Gastrocnemius medialis (tissue), 4 donors: ENCODE measurements at regions of chr11 and their contacts with region 1.

Region 1: DNA sequence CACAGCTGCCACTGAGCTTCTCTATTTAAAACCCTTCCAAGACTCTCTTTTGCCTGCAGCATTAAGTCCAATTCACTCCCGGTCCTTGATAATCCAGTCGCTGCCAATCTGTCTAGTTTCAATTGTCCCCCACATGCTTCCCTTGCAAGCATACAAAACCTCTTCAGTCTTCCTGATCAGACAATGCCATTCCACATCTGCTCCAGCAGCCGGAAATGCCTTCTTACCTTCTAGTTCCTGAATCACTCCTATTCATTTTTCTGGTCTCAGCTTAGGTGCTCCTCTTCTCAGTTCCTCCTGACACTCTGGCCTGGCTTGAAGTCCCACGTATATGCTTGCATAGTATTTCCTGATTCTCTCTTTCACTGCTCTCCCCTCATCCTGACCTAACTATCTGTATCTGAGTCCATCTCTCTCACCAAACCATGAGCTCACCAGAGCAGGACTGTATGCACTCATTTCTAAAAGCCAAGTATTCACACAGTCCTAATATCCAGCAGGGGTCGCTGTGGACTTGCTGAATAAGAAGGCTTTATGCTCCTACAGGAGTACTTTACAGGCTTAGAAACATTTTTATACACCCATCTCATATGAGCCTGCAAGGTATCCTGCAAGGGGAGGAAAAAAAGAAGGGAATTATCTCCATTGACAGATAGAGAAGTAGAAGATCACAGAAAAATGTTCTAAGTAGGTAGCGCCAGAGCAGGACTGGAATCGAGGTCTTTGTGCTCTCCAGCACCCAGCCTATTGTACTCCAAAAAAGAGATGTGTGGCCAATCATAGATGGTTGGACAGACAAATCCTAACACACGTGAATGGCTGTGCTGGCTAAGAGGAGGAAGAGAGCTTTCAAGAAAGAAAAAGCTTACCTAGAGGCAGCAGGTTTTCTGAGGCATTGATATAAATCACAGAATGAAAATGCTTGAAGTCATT is 19.2 kb downstream of the XRRA1 start:
- DNase-seq: peak; percentile 54 to 65
- ATAC-seq: peak; percentile 79 to 94
- H3K4me3 ChIP-seq: no peak overlapping the region
- H3K27ac ChIP-seq: no peak overlapping the region
- H3K4me1 ChIP-seq: peaks cover 6 to 8% of the 10 kb centered on the region in 2 donors
- H3K27me3 ChIP-seq: no peaks in the 10 kb centered on the region
- CTCF ChIP-seq: peak; percentile 63 to 85 (median 84)
- POLR2A ChIP-seq: no peak

Region 2: DNA sequence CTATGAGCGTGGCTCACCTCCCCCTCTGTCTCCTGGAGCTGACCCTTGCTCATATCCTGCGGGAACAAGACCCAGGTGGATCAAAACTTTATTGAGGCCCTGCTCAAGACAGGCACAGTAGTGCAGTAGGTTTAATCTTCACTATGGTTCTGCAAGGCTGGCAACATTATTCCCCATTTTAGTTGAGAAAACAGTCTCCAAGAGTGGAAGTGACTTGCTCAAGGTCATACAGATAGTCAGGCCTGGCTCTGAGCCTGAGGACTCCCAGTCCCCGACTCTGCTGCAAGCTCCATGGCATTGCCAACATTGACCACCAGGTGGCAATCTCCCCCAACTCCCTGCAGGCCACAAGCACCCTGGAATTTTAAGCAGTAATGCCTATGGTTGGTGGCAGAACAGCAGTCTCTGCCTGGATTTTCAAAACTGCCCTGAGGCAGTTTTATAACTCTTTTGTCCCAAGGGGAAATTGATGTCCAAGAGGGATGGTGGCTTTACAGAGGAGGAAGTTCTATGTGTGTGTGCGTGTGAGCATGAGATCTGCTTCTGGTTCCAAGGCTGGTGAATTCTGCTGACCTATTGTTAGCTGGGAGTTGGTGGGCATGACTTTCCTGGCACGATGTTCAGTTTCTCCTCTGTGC is 93.2 kb after region 1 on chr11:
- in situ Hi-C with region 1: loop called in 2 of 4 experiments (anchors 5 to 10 kb)
- intact Hi-C with region 1: no loop called
- DNase-seq: peak; percentile 49 to 82
- ATAC-seq: peak; percentile 79 to 92
- H3K4me3 ChIP-seq: no peak overlapping the region
- H3K27ac ChIP-seq: peak overlapping the region; percentile 3 to 60 (median 8)
- H3K4me1 ChIP-seq: peaks cover 30 to 42% of the 10 kb centered on the region in 2 donors
- H3K27me3 ChIP-seq: no peaks in the 10 kb centered on the region
- CTCF ChIP-seq: peak; percentile 86 to 96 (median 89)
- POLR2A ChIP-seq: no peak

Region 3: GRCh38 chr11:75031771-75032549 is 102.3 kb after region 1 on chr11:
- in situ Hi-C with region 1: loop called in 2 of 4 experiments (anchors 5 to 10 kb)
- intact Hi-C with region 1: loop called (anchors 1 kb)
- DNase-seq: peak; percentile 50 to 69
- ATAC-seq: peak; percentile 74 to 92
- H3K4me3 ChIP-seq: no peak overlapping the region
- H3K27ac ChIP-seq: no peak overlapping the region
- H3K4me1 ChIP-seq: peaks cover 12 to 20% of the 10 kb centered on the region in 2 donors
- H3K27me3 ChIP-seq: no peaks in the 10 kb centered on the region
- CTCF ChIP-seq: peak; percentile 49 to 83 (median 77)
- POLR2A ChIP-seq: no peak

Region 4: GRCh38 chr11:75204685-75205563 is 275.2 kb after region 1 on chr11:
- in situ Hi-C with region 1: no loop called
- intact Hi-C with region 1: loop called (anchors 10 kb)
- DNase-seq: peak; percentile 49 to 68
- ATAC-seq: peak; percentile 81 to 92
- H3K4me3 ChIP-seq: no peak overlapping the region
- H3K27ac ChIP-seq: no peak overlapping the region
- H3K4me1 ChIP-seq: no peaks in the 10 kb centered on the region
- H3K27me3 ChIP-seq: no peaks in the 10 kb centered on the region
- CTCF ChIP-seq: peak; percentile 60 to 87 (median 82)
- POLR2A ChIP-seq: no peak

Region 5: GRCh38 chr11:75241036-75241905 is 311.6 kb after region 1 on chr11:
- in situ Hi-C with region 1: loop called (anchors 5 to 25 kb)
- intact Hi-C with region 1: loop called (anchors 1 kb)
- DNase-seq: peak; percentile 23 to 61
- ATAC-seq: peak; percentile 94 to 95
- H3K4me3 ChIP-seq: peak overlapping the region in 3 of 4 donors; percentile 35 to 46 (median 43)
- H3K27ac ChIP-seq: no peak overlapping the region
- H3K4me1 ChIP-seq: peaks cover 0 to 6% of the 10 kb centered on the region in 2 donors
- H3K27me3 ChIP-seq: peaks cover 27 to 28% (median 27%) of the 10 kb centered on the region in 3 donors
- CTCF ChIP-seq: peak in 4 of 5 experiments; percentile 89 to 99 (median 94)
- POLR2A ChIP-seq: no peak

Region 6: DNA sequence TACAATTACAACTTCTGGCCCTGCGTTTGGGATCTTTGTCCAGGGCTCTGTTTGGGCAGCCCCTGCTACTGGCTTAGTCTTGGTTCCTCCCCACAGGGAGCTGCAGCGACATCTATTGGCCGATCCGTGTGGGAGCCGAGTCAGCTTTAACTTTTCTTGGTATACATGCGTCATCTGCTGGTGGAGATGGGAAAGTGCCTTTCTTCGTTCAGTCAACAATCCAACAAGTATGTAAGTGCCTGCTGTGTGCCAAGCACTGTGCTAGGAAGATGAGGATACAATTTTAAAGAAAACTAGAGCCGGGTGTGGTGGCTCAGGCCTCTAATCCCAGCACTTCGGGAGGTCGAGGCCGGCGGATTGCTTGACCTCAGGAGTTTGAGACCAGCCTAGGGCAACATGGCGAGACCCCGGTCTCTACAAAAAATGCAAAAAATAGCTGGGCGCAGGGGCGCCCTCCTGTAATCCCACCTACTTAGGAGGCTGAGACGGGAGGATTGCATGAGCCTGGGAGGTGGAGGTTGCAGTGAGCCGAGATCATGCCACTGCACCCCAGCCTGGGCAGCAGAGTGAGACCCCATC is 319.1 kb after region 1 on chr11:
- in situ Hi-C with region 1: loop called (anchors 5 to 25 kb)
- intact Hi-C with region 1: no loop called
- DNase-seq: peak; percentile 63 to 76
- ATAC-seq: peak; percentile 91 to 99
- H3K4me3 ChIP-seq: no peak overlapping the region
- H3K27ac ChIP-seq: no peak overlapping the region
- H3K4me1 ChIP-seq: no peaks in the 10 kb centered on the region
- H3K27me3 ChIP-seq: peaks cover 0 to 6% (median 0%) of the 10 kb centered on the region in 3 donors
- CTCF ChIP-seq: peak; percentile 87 to 97 (median 94)
- POLR2A ChIP-seq: no peak